ENCODE measurements at regions of chr21 and their contacts with region 1.

Region 1: GRCh38 chr21:38903690-38904139 is 98.0 kb downstream of the ETS2 start:
- DNase-seq: peak; percentile 100
- H3K4me3 ChIP-seq: no peak overlapping the region
- H3K27ac ChIP-seq: peak overlapping the region; percentile 91
- H3K4me1 ChIP-seq: peaks cover 40% of the 10 kb centered on the region
- H3K27me3 ChIP-seq: no peaks in the 10 kb centered on the region
- CTCF ChIP-seq: no peak

Region 2: DNA sequence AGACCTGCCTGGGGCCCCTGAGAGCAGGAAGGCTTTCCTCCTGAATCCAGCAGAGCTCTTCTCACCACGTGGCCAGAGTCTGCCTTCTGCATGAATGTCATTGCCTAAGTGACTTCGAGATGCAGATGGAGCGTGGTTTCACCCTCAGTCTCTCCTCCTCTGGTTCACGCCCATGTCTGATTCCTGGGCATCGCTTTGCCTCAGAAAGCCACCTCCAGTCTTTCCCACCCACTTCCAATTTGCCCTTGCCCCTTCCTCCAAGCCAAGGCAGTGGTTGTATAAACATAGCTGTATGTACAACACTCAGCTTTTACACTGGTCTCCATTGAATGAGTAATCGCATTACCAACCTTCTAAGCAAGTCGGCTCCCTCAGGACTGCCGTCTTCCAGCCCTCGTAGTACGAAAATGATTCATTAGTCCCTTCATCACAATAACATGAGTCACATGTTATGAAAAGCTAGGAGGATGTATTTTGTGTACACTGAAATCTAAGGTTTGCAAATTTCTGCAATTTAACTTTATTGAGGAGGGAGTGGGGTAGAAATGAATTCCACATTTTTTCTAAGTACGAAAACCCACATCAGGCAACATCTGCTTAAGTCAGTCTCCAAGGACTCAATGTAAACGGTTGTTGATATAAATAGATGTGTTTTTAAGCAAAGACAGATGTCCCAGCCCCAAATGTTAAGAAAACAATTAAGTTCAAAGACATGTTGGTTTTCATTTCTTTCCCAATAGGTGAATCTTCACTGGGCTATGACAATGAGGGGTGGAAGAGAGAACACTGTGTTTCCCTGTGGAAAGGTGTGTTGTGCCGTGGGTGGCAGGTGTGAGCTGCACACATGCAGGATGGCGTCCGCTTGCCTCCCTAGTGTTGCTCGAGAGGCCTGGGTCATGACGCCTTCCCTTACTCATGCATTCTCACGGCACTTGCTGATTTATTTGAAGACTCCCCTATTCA is 130.3 kb before region 1 on chr21:
- CTCF ChIA-PET with region 1: no interaction called
- dilution Hi-C with region 1: no loop called
- in situ Hi-C with region 1: no loop called
- intact Hi-C with region 1: no loop called
- DNase-seq: peak; percentile 92
- H3K4me3 ChIP-seq: no peak overlapping the region
- H3K27ac ChIP-seq: peak overlapping the region; percentile 61
- H3K4me1 ChIP-seq: peaks cover 17% of the 10 kb centered on the region
- H3K27me3 ChIP-seq: no peaks in the 10 kb centered on the region
- CTCF ChIP-seq: no peak

Region 3: DNA sequence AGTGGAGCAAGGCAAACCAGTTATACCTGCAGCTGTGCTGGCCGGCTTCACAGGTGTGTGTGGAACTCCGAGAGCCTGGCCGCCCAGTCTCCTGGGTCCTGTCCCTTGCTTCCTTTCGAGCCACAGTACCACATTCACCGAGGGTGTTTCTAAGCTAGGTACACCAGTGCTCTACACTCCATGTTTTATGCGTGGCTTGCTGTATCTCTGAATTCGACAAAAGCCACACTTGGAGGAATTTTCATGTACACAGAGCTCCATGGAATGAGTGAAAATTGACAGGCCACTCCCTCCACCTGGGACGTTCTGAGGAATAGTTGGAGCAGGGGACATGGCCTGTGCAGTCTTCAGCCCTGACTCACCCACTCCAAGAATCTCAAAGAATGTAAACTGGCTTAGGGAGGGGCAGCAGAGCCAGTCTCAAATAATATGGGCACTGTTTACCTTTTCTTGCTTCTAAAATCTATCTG is 84.0 kb before region 1 on chr21:
- CTCF ChIA-PET with region 1: no interaction called
- dilution Hi-C with region 1: no loop called
- in situ Hi-C with region 1: loop called in 1 of 2 experiments (anchors 10 kb)
- intact Hi-C with region 1: no loop called
- DNase-seq: peak; percentile 72
- H3K4me3 ChIP-seq: no peak overlapping the region
- H3K27ac ChIP-seq: peak overlapping the region; percentile 46
- H3K4me1 ChIP-seq: peaks cover 29% of the 10 kb centered on the region
- H3K27me3 ChIP-seq: no peaks in the 10 kb centered on the region
- CTCF ChIP-seq: no peak

Region 4: GRCh38 chr21:38839328-38840286 is 64.1 kb before region 1 on chr21:
- CTCF ChIA-PET with region 1: interaction called, 6 read pairs
- dilution Hi-C with region 1: no loop called
- in situ Hi-C with region 1: no loop called
- intact Hi-C with region 1: loop called (anchors 1 kb)
- DNase-seq: peak; percentile 97
- H3K4me3 ChIP-seq: no peak overlapping the region
- H3K27ac ChIP-seq: peak overlapping the region; percentile 96
- H3K4me1 ChIP-seq: peaks cover 33% of the 10 kb centered on the region
- H3K27me3 ChIP-seq: no peaks in the 10 kb centered on the region
- CTCF ChIP-seq: no peak

Measured in mammary epithelial cell (primary cell).